Caco-2 (cell line): ENCODE measurements at regions of chr6 and their contacts with region 1.

Region 1: GRCh38 chr6:161341638-161342433 is 68.0 kb upstream of the AGPAT4 start:
- DNase-seq: peak in 1 of 2 experiments; percentile 28
- H3K4me3 ChIP-seq: no peak overlapping the region
- H3K4me3 Mint-ChIP-seq: no peak overlapping the region
- H3K27ac Mint-ChIP-seq: no peak overlapping the region
- H3K4me1 ChIP-seq: peaks cover 51% of the 10 kb centered on the region
- H3K4me1 Mint-ChIP-seq: peaks cover 34% of the 10 kb centered on the region
- H3K27me3 ChIP-seq: no peaks in the 10 kb centered on the region
- H3K27me3 Mint-ChIP-seq: no peaks in the 10 kb centered on the region
- CTCF ChIP-seq: no peak

Region 2: DNA sequence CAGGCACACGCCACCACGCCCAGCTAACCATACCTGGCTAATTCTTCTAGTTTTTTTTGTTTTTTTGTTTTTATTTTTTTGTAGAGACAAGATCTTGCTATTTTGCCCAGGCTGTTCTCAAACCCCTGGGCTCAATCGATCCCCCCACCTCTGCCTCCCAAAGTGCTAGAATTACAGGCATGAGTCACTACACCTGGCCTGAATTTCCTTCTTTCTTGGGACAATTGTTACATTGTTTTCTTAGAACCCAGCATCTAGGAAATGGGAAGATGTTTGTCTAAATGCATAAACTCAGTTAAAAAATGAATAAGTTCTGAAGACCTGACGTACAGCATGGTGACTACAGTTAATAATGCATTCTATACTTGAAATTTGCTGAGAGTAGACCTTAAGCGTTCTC is 57.2 kb before region 1 on chr6:
- CTCF ChIA-PET with region 1: no interaction called
- POLR2A ChIA-PET with region 1: no interaction called
- intact Hi-C with region 1: loop called (anchors 5 kb)
- DNase-seq: no peak
- H3K4me3 ChIP-seq: no peak overlapping the region
- H3K4me3 Mint-ChIP-seq: no peak overlapping the region
- H3K27ac Mint-ChIP-seq: no peak overlapping the region
- H3K4me1 ChIP-seq: no peaks in the 10 kb centered on the region
- H3K4me1 Mint-ChIP-seq: peaks cover 17% of the 10 kb centered on the region
- H3K27me3 ChIP-seq: no peaks in the 10 kb centered on the region
- H3K27me3 Mint-ChIP-seq: no peaks in the 10 kb centered on the region
- CTCF ChIP-seq: no peak